GM10248 (cell line): ENCODE measurements at regions of chr7 and their contacts with region 1.

Region 1: DNA sequence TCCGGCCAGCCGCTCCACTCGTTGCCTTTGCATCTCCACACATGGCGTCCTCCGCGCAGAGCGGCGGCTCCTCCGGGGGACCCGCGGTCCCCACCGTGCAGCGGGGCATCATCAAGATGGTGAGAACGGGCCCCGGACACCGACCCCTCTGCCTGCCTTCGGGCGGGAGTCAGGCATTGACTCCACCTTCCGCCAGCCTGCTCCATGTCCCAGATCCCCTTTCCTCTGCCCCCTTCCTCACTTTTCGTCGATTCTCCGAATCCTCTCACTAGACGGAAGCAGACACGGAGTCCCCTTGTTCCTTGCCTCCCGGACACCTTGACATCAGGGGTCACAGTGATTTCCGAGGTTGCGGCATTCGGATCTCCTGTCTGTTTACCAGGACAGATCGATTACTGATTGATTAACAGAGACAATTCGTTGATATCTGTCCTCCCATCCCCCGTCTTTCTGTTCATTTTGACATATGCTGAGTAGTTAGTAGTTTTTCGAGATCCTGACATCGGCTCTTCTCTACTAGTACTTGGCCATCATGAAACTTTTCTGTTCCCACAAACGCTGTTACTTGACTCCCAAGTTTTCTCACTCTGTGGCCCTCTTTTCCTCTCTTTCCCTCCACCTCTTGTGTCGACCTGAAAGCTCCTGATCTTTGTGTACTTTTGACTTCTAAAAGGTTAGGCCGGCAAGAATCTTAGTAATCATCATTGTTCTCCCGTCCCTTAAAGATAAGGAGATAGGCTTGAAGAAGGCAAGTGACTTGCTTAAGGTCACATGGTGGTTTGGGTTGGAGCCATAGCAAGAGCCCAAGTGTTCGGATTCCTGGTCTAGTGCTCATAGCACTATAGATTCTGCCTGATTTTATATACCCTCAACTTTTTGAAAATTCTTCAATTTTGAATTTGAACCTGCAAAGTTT is 597 bp downstream of the SND1 start:
- DNase-seq: no peak
- CTCF ChIP-seq: no peak

Region 2: DNA sequence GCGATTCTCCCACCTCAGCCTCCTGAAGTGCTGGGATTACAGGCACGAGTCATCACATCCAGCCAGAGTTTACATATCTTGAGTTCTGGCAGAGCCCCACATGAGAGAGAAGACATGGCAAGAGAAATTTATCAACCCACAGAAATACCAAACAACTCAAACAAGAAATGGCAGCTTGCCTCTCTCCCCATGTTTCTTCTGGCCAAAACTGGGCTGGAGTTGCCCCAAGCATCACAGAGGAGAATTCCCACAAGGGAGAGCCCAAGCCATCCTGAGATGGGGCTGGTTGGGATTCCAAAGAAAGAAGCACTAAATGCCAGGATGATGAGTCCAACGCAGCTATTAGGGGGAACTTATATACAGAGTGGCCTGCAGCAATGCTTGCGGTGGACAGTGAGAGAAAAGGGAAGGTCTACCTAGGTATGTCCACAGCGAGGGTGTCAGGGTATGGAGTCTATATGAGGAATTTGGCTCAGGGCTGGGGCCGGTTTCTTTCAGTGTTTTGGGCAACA is 20.3 kb before region 1 on chr7:
- CTCF ChIA-PET with region 1: no interaction called
- POLR2A ChIA-PET with region 1: no interaction called
- DNase-seq: no peak
- CTCF ChIP-seq: no peak

Region 3: GRCh38 chr7:127667017-127667670 is 14.6 kb after region 1 on chr7:
- CTCF ChIA-PET with region 1: interaction called, 13 read pairs
- POLR2A ChIA-PET with region 1: interaction called, 6 read pairs
- DNase-seq: no peak
- CTCF ChIP-seq: no peak

Region 4: GRCh38 chr7:127733986-127734385 is 81.4 kb after region 1 on chr7:
- CTCF ChIA-PET with region 1: no interaction called
- POLR2A ChIA-PET with region 1: no interaction called
- DNase-seq: no peak
- CTCF ChIP-seq: no peak